HepG2 (cell line): ENCODE measurements at regions of chr18 and their contacts with region 1.

Region 1: GRCh38 chr18:7272311-7273049 is 41.6 kb downstream of the LRRC30 start:
- DNase-seq: peak; percentile 55
- ATAC-seq: peak; percentile 88
- H3K4me3 ChIP-seq: peak overlapping the region; percentile 51 to 73 (median 58)
- H3K27ac ChIP-seq: no peak overlapping the region
- H3K4me1 ChIP-seq: peaks cover 12% of the 10 kb centered on the region
- H3K27me3 ChIP-seq: peaks cover 0 to 1% of the 10 kb centered on the region in 2 experiments; a peak in 1 of 5 replicates
- CTCF ChIP-seq: peak; percentile 82
- EP300 ChIP-seq: no peak
- POLR2A ChIP-seq: no peak
- RAD21 ChIP-seq: peak; percentile 40; the same call in 1 of the 2 replicates

Region 2: GRCh38 chr18:7017013-7017412 is 255.5 kb before region 1 on chr18:
- CTCF ChIA-PET with region 1: no interaction called
- POLR2A ChIA-PET with region 1: no interaction called
- in situ Hi-C with region 1: no loop called
- intact Hi-C with region 1: no loop called
- DNase-seq: no peak
- ATAC-seq: no peak
- H3K4me3 ChIP-seq: no peak overlapping the region
- H3K27ac ChIP-seq: no peak overlapping the region
- H3K4me1 ChIP-seq: no peaks in the 10 kb centered on the region
- H3K27me3 ChIP-seq: no peaks in the 10 kb centered on the region
- CTCF ChIP-seq: no peak
- EP300 ChIP-seq: no peak
- POLR2A ChIP-seq: no peak
- RAD21 ChIP-seq: no peak

Region 3: GRCh38 chr18:7417742-7418141 is 145.3 kb after region 1 on chr18:
- CTCF ChIA-PET with region 1: no interaction called
- POLR2A ChIA-PET with region 1: no interaction called
- in situ Hi-C with region 1: no loop called
- intact Hi-C with region 1: no loop called
- DNase-seq: no peak
- ATAC-seq: no peak
- H3K4me3 ChIP-seq: no peak overlapping the region
- H3K27ac ChIP-seq: no peak overlapping the region
- H3K4me1 ChIP-seq: no peaks in the 10 kb centered on the region
- H3K27me3 ChIP-seq: no peaks in the 10 kb centered on the region
- CTCF ChIP-seq: no peak
- EP300 ChIP-seq: no peak
- POLR2A ChIP-seq: no peak
- RAD21 ChIP-seq: no peak

Region 4: GRCh38 chr18:7566567-7567473 is 294.3 kb after region 1 on chr18 and contains the start of gene PTPRM:
- CTCF ChIA-PET with region 1: interaction called, 11 read pairs
- POLR2A ChIA-PET with region 1: no interaction called
- in situ Hi-C with region 1: loop called (anchors 5 kb)
- intact Hi-C with region 1: loop called (anchors 2 kb)
- DNase-seq: peak; percentile 47
- ATAC-seq: peak; percentile 79
- H3K4me3 ChIP-seq: peak within 1 kb of the TSS; percentile 88 to 96 (median 92)
- H3K27ac ChIP-seq: peak within 1 kb of the TSS; percentile 71
- H3K4me1 ChIP-seq: peaks cover 32% of the 10 kb centered on the region
- H3K27me3 ChIP-seq: peaks cover 0 to 14% of the 10 kb centered on the region in 2 experiments; a peak in 2 of 5 replicates
- CTCF ChIP-seq: peak; percentile 43; the same call in 1 of the 2 replicates
- EP300 ChIP-seq: no peak
- POLR2A ChIP-seq: peak; percentile 42 to 48; a peak in 2 of 4 replicates
- RAD21 ChIP-seq: peak; percentile 83
- total RNA-seq, gene PTPRM: 6.5 and 12.6 TPM in 2 replicates

Region 5: DNA sequence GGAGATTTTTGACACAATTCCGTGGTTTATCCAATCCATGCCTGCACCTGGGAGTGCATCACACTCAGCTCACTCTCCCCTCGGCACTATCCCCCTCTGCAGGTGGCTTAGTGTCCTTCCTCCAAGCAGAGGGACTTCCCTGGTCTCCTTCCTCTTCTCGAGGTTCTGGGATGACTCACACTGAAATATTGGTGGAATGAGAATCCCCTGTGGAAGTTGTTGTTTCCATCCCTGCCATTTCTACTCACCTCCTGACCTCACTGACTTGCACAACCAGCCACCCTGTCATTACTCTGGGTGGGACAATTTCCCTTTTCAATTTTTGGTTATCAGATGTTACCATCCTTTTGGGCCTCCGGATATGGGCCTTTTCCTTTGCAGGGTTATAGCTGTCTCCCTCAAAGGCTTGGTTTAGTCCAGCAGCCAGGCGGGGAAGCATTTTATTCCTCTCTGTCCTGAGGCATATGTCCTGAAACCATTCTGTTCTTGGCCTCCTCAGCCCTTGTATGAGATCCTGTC is 354.5 kb after region 1 on chr18:
- CTCF ChIA-PET with region 1: no interaction called
- POLR2A ChIA-PET with region 1: no interaction called
- in situ Hi-C with region 1: no loop called
- intact Hi-C with region 1: loop called (anchors 5 kb)
- DNase-seq: peak; percentile 93
- ATAC-seq: peak; percentile 89
- H3K4me3 ChIP-seq: peak overlapping the region in 2 of 3 experiments; percentile 25 to 52; a peak in 4 of 6 replicates
- H3K27ac ChIP-seq: peak overlapping the region; percentile 85
- H3K4me1 ChIP-seq: peaks cover 59% of the 10 kb centered on the region
- H3K27me3 ChIP-seq: no peaks in the 10 kb centered on the region
- CTCF ChIP-seq: peak; percentile 64
- EP300 ChIP-seq: no peak
- POLR2A ChIP-seq: no peak
- RAD21 ChIP-seq: peak; percentile 39; the same call in 1 of the 2 replicates

Region 6: GRCh38 chr18:7696780-7697179 is 424.3 kb after region 1 on chr18:
- CTCF ChIA-PET with region 1: no interaction called
- POLR2A ChIA-PET with region 1: no interaction called
- in situ Hi-C with region 1: no loop called
- intact Hi-C with region 1: no loop called
- DNase-seq: no peak
- ATAC-seq: no peak
- H3K4me3 ChIP-seq: no peak overlapping the region
- H3K27ac ChIP-seq: no peak overlapping the region
- H3K4me1 ChIP-seq: no peaks in the 10 kb centered on the region
- H3K27me3 ChIP-seq: no peaks in the 10 kb centered on the region
- CTCF ChIP-seq: no peak
- EP300 ChIP-seq: no peak
- POLR2A ChIP-seq: no peak
- RAD21 ChIP-seq: no peak

Region 7: DNA sequence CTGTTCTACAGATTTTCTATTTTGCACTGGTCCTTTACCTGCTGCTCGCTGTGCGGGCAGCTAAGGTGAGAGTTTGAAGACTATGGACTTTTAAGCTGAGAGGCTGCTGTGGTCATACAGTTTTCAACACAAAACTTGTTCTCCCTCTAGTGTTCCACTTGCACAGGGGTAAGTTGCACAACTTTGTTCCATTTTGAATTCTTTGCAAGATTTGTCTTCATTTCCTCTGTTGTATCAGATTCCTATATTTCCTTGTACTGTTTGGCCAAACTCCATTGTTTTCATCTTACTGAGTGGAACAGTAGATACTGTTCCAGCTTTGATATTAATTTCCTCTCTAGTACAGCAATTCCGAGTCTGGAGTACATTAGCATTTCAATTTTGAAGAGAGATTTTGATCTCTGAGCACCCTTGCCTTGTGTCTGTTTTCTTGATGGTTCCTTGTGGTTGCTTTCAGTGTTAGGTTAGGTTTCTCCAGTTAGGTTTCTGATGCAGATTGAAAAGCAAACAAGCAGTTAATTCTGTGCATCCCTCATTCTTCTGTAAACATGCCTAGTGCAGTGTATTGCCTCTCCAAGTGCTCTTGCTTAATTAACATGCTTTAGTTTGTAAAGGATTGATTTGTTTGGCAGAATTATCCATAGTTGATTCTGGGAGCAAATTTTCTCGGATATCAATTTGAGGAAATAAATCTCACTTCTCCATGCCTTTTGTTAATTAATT is 483.4 kb after region 1 on chr18:
- CTCF ChIA-PET with region 1: no interaction called
- POLR2A ChIA-PET with region 1: no interaction called
- in situ Hi-C with region 1: no loop called
- intact Hi-C with region 1: loop called (anchors 5 kb)
- DNase-seq: peak; percentile 63
- ATAC-seq: peak; percentile 53
- H3K4me3 ChIP-seq: peak overlapping the region in 2 of 3 experiments; percentile 52 to 69; a peak in 3 of 6 replicates
- H3K27ac ChIP-seq: peak overlapping the region; percentile 84
- H3K4me1 ChIP-seq: peaks cover 90% of the 10 kb centered on the region
- H3K27me3 ChIP-seq: no peaks in the 10 kb centered on the region
- CTCF ChIP-seq: peak; percentile 68
- EP300 ChIP-seq: 0 out of 4 replicates have a peak, but pooled peaks of 1 of the 2 experiments have one; percentile 38
- POLR2A ChIP-seq: no peak
- RAD21 ChIP-seq: peak; percentile 53; the same call in 1 of the 2 replicates

Region 8: DNA sequence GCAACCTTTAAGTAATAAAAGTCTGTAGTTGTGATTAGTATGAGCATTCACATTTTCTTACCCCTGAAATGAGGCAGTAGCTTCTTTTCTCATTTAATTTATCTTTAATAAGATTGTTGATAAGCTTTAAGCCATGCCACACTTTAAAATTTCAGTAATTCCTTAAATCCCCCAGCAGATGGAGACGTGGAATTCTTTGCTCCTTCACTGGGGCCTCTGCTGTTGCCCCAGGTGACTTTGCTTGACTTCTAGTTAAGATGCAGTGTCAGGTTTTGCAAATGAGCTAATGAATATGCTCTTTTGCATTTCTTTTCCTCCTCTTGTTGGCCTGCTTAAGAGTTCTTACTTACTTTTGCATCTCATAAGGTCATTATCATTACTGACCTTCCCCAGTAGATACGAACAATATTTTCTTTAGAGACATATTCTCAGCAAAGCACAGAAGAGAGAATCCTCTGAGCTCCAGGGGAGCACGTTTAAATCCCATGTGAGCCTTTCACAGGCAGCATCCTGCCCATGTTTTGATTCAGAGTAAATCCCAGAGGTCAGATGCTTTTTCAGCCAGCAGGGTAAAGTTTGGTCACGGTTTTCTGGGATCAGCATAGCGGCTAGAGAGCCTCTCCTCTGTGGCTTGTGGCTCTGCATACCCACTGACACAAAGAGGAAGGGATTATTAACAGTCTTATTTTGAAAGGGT is 517.5 kb after region 1 on chr18:
- CTCF ChIA-PET with region 1: no interaction called
- POLR2A ChIA-PET with region 1: no interaction called
- in situ Hi-C with region 1: loop called (anchors 25 kb)
- intact Hi-C with region 1: loop called (anchors 5 kb)
- DNase-seq: peak; percentile 31
- ATAC-seq: peak; percentile 68
- H3K4me3 ChIP-seq: no peak overlapping the region
- H3K27ac ChIP-seq: no peak overlapping the region
- H3K4me1 ChIP-seq: peaks cover 12% of the 10 kb centered on the region
- H3K27me3 ChIP-seq: no peaks in the 10 kb centered on the region
- CTCF ChIP-seq: peak; percentile 60
- EP300 ChIP-seq: no peak
- POLR2A ChIP-seq: no peak
- RAD21 ChIP-seq: no peak

Region 9: GRCh38 chr18:8389391-8390340 is 1117.2 kb after region 1 on chr18:
- CTCF ChIA-PET with region 1: no interaction called
- POLR2A ChIA-PET with region 1: no interaction called
- in situ Hi-C with region 1: loop called (anchors 25 kb)
- intact Hi-C with region 1: no loop called
- DNase-seq: peak; percentile 59
- ATAC-seq: peak; percentile 93
- H3K4me3 ChIP-seq: no peak overlapping the region
- H3K27ac ChIP-seq: no peak overlapping the region
- H3K4me1 ChIP-seq: no peaks in the 10 kb centered on the region
- H3K27me3 ChIP-seq: no peaks in the 10 kb centered on the region
- CTCF ChIP-seq: peak; percentile 88
- EP300 ChIP-seq: no peak
- POLR2A ChIP-seq: no peak
- RAD21 ChIP-seq: peak; percentile 76